ENCODE measurements at regions of chr1 and their contacts with region 1.

Region 1: DNA sequence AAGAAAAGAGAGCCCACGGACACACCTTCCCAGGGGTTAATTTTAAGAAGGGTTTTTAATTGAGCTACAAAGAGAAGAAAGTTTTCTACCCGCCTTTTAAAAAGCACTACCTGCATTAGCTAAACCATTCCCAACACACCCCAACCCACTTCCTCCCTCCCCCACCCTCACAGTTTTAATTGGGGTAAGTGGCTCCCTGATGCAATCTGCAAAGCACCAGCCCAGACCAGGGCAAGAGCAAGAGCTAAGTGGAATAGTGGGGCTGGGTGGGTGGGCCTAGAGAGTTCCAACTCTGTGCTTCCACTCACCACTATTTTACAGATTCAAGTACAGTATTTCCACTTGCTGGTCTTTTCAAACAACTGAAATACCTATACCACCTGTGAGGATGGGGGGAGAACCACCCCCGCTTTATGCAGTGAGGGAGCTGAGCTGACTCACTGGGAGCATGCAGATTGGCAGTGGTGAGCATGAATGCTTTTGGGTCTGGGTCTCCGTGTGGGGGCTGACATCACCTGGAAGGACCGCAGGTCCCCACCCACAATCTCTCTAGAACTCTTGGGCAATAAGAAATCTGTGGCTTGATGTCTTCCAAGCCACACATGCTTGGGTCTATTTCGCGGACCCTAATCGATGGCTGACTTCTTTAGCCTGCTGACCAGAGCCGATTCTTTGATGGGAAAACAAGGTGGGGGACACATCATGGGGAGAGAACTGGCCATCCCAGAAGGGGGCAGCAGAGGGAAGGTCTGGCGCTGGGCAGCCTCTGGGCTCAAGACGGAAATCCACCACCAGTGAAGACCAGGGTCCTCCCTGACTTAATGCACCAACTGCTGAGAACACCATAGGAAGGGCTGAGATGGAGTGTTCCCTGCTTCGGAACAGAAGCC is 95.5 kb downstream of the SSBP3 start:
- DNase-seq: no peak
- H3K4me3 ChIP-seq: no peak overlapping the region
- H3K27ac ChIP-seq: peak overlapping the region in 1 of 8 donors; percentile 68
- H3K4me1 ChIP-seq: peaks cover 0 to 60% (median 32%) of the 10 kb centered on the region in 6 donors
- H3K27me3 ChIP-seq: no peaks in the 10 kb centered on the region
- CTCF ChIP-seq: peak in 10 of 11 experiments; percentile 17 to 61 (median 52)
- POLR2A ChIP-seq: no peak

Region 2: DNA sequence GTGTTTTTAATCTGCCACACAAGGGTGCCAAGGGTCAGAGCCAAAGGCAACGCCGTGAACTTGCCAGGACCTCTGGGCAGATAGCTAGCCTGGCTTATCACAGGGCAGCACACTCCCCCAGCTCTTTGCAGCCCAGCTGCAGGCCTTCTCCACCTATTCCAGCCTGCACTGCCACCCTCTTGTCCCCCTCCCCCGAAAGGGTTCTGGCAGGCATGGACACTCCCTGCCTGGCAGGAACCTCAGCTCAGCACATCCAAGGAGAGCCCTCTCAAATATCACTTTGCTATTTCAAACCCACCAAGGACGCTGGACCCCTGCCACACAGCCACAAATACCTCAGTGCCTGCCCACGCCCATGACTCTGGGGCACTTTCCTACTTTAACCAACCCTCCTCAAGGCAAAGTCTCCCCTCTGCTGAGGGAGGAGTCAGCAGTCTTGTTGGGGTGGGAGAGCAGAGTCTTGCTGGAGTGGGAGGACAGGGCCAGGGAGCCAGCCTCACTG is 86.5 kb after region 1 on chr1:
- intact Hi-C with region 1: loop called (anchors 10 kb)
- DNase-seq: peak; percentile 69
- H3K4me3 ChIP-seq: no peak overlapping the region
- H3K27ac ChIP-seq: peak overlapping the region in 4 of 8 donors; percentile 27 to 53 (median 42)
- H3K4me1 ChIP-seq: peaks cover 4 to 74% (median 39%) of the 10 kb centered on the region in 6 donors
- H3K27me3 ChIP-seq: no peaks in the 10 kb centered on the region
- CTCF ChIP-seq: no peak
- POLR2A ChIP-seq: no peak

Region 3: DNA sequence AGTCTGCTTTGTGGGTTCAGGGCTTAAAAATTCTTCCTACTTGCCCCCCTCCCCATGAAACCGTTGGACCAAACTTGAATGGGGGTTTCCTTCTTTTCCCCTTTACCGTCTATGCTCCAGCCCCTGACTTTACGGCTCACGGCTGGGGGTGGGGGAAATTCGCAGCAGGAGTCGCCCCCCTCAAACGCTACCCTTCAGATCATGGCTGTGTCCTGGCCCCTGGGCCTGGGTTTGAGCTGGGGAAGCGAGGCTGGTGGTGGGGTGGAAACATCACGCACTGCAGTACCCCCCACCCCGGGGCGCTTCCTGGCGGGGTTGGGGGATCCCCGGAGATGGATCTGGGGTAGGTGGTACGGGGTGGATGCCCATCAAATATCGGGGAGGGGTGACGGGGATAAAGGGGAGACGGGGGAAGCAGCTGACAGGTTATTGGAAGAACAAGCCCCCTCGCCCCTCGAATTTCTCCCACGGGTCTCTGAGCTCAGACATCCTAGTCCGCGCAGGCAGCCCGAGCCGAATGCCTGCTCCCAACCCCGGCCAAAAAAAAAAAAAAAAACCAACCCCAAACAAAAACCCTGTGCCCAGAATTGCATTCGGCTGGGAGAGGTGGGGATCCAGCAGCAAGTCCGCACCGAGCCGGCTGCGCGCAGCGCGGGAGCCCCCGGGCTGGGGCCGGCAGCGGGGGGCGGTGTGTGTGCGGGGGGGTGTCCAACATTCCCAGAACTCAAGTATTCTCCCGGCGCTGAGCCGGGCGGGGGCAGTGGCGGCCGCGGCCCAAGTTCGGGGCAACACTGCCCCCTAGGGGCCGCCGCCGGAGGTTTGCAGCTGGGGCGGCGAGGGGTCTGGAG is 178.3 kb after region 1 on chr1:
- intact Hi-C with region 1: loop called (anchors 10 kb)
- DNase-seq: peak; percentile 95
- H3K4me3 ChIP-seq: peak overlapping the region; percentile 60 to 81 (median 63)
- H3K27ac ChIP-seq: peak overlapping the region; percentile 78 to 91 (median 88)
- H3K4me1 ChIP-seq: peaks cover 17 to 52% (median 36%) of the 10 kb centered on the region in 6 donors
- H3K27me3 ChIP-seq: peaks cover 0 to 42% (median 0%) of the 10 kb centered on the region in 7 donors
- CTCF ChIP-seq: peak; percentile 86 to 98 (median 96)
- POLR2A ChIP-seq: no peak